IMR-90 (cell line): ENCODE measurements at regions of chr5 and their contacts with region 1.

Region 1: GRCh38 chr5:15021266-15022046 is 149.9 kb upstream of the ANKH start:
- DNase-seq: peak; percentile 80
- ATAC-seq: peak; percentile 89
- H3K4me3 ChIP-seq: no peak overlapping the region
- H3K27ac ChIP-seq: peak overlapping the region; percentile 82
- H3K4me1 ChIP-seq: peaks cover 10% of the 10 kb centered on the region
- H3K27me3 ChIP-seq: no peaks in the 10 kb centered on the region
- CTCF ChIP-seq: no peak
- POLR2A ChIP-seq: no peak
- RAD21 ChIP-seq: no peak

Region 2: GRCh38 chr5:14879937-14880589 is 141.4 kb before region 1 on chr5:
- CTCF ChIA-PET with region 1: no interaction called
- POLR2A ChIA-PET with region 1: no interaction called
- dilution Hi-C with region 1: no loop called
- in situ Hi-C with region 1: no loop called
- intact Hi-C with region 1: no loop called
- DNase-seq: peak; percentile 70
- ATAC-seq: peak; percentile 75
- H3K4me3 ChIP-seq: no peak overlapping the region
- H3K27ac ChIP-seq: peak overlapping the region; percentile 4; the same call in 1 of the 2 replicates
- H3K4me1 ChIP-seq: peaks cover 4% of the 10 kb centered on the region; the same call in 1 of the 2 replicates
- H3K27me3 ChIP-seq: no peaks in the 10 kb centered on the region; the same call in none of the 2 replicates
- CTCF ChIP-seq: no peak
- POLR2A ChIP-seq: no peak
- RAD21 ChIP-seq: no peak

Region 3: DNA sequence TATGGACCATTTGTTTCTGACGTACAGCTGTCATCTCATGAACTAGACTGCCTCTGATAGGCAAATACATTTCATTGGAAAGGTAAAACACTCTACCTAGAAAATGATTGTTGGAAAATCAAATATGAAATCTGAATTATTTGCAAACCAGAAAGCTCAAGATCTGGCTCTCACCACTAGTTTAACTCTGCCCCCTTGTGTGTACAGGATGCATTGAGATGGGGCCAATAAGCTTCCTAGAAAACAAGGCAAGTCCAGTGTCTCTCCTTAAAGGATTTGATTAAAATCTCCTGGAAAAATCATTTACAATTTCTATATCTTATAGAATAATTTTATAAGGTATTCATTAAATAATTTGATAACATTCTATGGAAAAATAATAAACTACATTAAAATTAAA is 162.1 kb after region 1 on chr5:
- CTCF ChIA-PET with region 1: no interaction called
- POLR2A ChIA-PET with region 1: no interaction called
- dilution Hi-C with region 1: no loop called
- in situ Hi-C with region 1: no loop called
- intact Hi-C with region 1: loop called (anchors 5 kb)
- DNase-seq: peak; percentile 6
- ATAC-seq: no peak
- H3K4me3 ChIP-seq: no peak overlapping the region
- H3K27ac ChIP-seq: no peak overlapping the region
- H3K4me1 ChIP-seq: no peaks in the 10 kb centered on the region
- H3K27me3 ChIP-seq: no peaks in the 10 kb centered on the region; the same call in 1 of the 2 replicates
- CTCF ChIP-seq: peak; percentile 24; the same call in 1 of the 2 replicates
- POLR2A ChIP-seq: no peak
- RAD21 ChIP-seq: peak; percentile 20; the same call in 1 of the 2 replicates